ENCODE measurements at regions of chr18 and their contacts with region 1.

Region 1: DNA sequence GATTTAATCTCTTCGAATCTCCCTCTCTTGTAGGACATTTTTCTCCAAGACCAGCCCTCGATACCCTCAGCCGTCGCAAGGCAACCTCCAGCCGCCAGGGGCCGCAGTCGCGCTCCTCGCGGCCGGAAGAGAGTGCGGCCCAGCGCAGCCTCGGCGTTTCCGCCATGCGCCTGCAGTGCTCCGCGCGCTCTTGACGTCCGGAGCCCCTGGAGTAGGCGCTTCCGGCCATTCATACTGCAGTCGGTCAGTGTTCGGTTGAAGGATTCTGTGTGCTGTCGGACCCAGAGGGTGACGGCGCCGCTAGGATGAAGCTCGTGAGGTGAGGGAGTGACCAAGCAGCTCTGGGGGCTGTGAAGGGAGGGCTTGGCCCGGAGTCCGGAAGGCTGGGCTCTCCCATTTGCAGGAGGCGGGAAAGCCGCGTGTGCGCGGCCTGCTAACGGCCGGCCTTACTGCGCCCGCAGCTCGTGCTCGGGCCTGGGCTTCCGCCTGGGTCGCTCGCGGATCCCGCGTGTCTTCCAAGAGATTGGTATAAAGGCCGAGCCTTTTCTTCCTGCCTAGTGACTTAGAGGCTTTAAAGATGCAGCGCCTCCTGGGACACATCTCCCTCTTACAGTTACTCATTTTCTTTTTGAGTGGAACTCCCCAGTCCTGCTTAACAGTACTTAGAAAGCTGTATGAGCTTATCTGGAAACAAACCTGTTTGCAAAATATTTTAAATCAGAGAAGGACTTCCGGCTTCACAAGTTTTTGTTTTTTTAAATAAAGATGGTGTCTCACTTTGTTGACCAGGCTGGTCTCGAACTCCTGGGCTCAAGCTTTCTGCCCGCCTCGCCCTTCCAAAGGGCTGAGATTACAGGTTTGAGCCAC is at the start of gene SNRPD1:
- DNase-seq: peak; percentile 75 to 95 (median 87)
- ATAC-seq: peak; percentile 100
- H3K4me3 ChIP-seq: peak within 1 kb of the TSS; percentile 99
- H3K4me3 Mint-ChIP-seq: peak within 1 kb of the TSS; percentile 90 to 100 (median 96)
- H3K27ac ChIP-seq: peak within 1 kb of the TSS; percentile 95
- H3K27ac Mint-ChIP-seq: peak within 1 kb of the TSS; percentile 91 to 99 (median 98)
- H3K4me1 ChIP-seq: peaks cover 14 to 21% of the 10 kb centered on the region in 2 donors
- H3K4me1 Mint-ChIP-seq: peaks cover 20 to 56% (median 46%) of the 10 kb centered on the region in 7 donors
- H3K27me3 ChIP-seq: no peaks in the 10 kb centered on the region
- H3K27me3 Mint-ChIP-seq: no peaks in the 10 kb centered on the region
- total RNA-seq, gene SNRPD1: 21.9 to 83.4 (median 26.5) TPM

Region 2: DNA sequence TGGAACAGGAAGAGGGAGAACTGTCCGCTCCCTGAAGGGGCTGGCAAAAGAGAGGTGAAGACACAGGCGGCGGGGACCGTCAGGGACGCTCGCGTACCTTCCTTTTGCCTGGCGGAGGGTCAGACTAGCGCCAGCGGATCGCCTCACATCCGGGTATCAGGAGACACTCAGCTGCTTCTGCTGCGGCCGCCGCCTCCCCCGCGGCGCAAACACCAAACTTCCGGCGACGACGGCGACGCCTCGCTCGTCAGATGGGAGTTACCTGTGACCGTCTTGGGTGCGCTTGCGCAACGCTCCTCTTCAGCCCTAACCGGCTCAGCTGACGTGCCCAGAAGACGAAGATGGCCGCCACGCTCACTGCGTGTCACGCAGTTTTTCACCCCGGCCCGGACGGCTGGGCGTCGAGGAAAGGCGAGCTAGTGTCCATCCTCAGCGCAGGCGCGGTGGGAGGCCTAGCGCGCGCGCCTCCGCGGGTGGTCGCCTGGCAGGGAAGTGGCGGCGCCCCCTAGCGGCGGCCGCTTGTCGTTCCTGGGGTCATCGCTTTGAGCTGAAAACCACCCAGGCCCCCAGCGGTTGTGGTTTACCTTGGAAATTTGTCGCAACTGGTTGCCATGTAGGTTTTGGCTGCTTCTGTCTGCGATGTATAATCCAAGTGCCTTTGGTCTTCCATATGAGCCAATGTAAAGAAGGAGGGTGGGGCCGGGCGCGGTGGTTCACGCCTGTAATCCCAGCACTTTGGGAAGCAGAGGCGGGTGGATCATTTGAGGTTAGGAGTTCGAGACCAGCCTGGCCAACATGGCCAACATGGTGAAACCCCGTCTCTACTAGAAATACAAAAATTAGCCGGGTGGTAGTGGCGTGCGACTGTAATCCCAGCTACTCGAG is 11.6 kb before region 1 on chr18 and contains the start of gene ESCO1:
- CTCF ChIA-PET with region 1: interaction called, 38 read pairs
- POLR2A ChIA-PET with region 1: interaction called, 95 read pairs
- intact Hi-C with region 1: loop called (anchors 1 kb)
- DNase-seq: peak; percentile 88 to 97 (median 95)
- ATAC-seq: peak; percentile 90
- H3K4me3 ChIP-seq: peak within 1 kb of the TSS; percentile 99
- H3K4me3 Mint-ChIP-seq: peak within 1 kb of the TSS; percentile 91 to 99 (median 96)
- H3K27ac ChIP-seq: peak within 1 kb of the TSS; percentile 84
- H3K27ac Mint-ChIP-seq: peak within 1 kb of the TSS; percentile 96 to 100 (median 99)
- H3K4me1 ChIP-seq: peaks cover 12 to 24% of the 10 kb centered on the region in 2 donors
- H3K4me1 Mint-ChIP-seq: peaks cover 16 to 57% (median 36%) of the 10 kb centered on the region in 7 donors
- H3K27me3 ChIP-seq: no peaks in the 10 kb centered on the region
- H3K27me3 Mint-ChIP-seq: no peaks in the 10 kb centered on the region
- total RNA-seq, gene ESCO1: 25.9 to 36.4 (median 35.1) TPM

Region 3: DNA sequence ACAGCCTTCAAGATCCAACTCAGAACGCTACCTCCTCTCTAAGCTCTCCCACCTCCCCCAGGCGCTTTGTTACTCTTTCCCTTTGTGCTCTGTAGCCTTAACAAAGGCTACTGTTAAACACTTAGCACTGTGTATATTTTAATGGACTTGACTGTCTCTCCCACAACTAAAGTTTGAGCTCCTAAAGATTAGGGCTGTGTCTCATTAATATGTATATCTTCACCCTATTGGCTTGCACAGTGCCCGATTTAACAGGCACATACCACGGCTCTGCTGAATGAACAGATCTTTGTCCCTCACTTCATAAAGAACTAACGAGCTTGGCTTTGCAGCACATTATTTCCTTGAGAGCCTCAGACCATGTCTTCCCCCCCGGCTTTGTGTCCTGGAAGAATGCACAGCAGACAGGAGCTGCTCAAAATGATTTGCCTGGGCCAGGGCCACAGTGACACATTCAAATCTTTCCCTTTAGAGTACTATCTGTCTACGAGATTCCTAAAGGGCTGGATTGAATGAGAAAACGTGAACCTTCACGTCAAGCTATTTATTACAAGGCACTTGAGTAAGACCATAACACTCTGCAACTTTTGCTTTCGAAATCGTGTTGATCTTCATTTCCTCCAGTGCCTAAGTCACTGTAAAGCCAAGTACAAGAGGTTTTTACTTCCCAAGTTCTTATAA is 70.2 kb after region 1 on chr18:
- CTCF ChIA-PET with region 1: interaction called, 5 read pairs
- POLR2A ChIA-PET with region 1: interaction called, 5 read pairs
- intact Hi-C with region 1: loop called in 1 of 2 experiments (anchors 1 kb)
- DNase-seq: peak in 8 of 9 donors; percentile 24 to 63 (median 47)
- ATAC-seq: peak; percentile 84
- H3K4me3 ChIP-seq: peak overlapping the region; percentile 63
- H3K4me3 Mint-ChIP-seq: no peak overlapping the region
- H3K27ac ChIP-seq: peak overlapping the region; percentile 80
- H3K27ac Mint-ChIP-seq: no peak overlapping the region
- H3K4me1 ChIP-seq: peaks cover 7% of the 10 kb centered on the region in 2 donors
- H3K4me1 Mint-ChIP-seq: peaks cover 0 to 23% (median 10%) of the 10 kb centered on the region in 7 donors
- H3K27me3 ChIP-seq: no peaks in the 10 kb centered on the region
- H3K27me3 Mint-ChIP-seq: no peaks in the 10 kb centered on the region

Region 4: GRCh38 chr18:21740724-21741510 is 128.6 kb after region 1 on chr18 and contains the start of gene MIB1:
- CTCF ChIA-PET with region 1: no interaction called
- POLR2A ChIA-PET with region 1: interaction called, 27 read pairs
- intact Hi-C with region 1: loop called (anchors 1 kb)
- DNase-seq: peak in 8 of 9 donors; percentile 42 to 99 (median 99)
- ATAC-seq: peak; percentile 69
- H3K4me3 ChIP-seq: peak within 1 kb of the TSS; percentile 77
- H3K4me3 Mint-ChIP-seq: peak within 1 kb of the TSS; percentile 83 to 96 (median 94)
- H3K27ac ChIP-seq: peak within 1 kb of the TSS; percentile 83
- H3K27ac Mint-ChIP-seq: peak within 1 kb of the TSS; percentile 78 to 97 (median 94)
- H3K4me1 ChIP-seq: peaks cover 9 to 13% of the 10 kb centered on the region in 2 donors
- H3K4me1 Mint-ChIP-seq: peaks cover 21 to 58% (median 43%) of the 10 kb centered on the region in 7 donors
- H3K27me3 ChIP-seq: no peaks in the 10 kb centered on the region
- H3K27me3 Mint-ChIP-seq: peaks cover 0 to 18% (median 0%) of the 10 kb centered on the region in 5 donors
- total RNA-seq, gene MIB1: 16.0 to 35.2 (median 19.8) TPM

Region 5: GRCh38 chr18:21851327-21851972 is 239.1 kb after region 1 on chr18:
- CTCF ChIA-PET with region 1: no interaction called
- POLR2A ChIA-PET with region 1: no interaction called
- intact Hi-C with region 1: loop called in 1 of 2 experiments (anchors 5 kb)
- DNase-seq: peak in 4 of 9 donors; percentile 1 to 17 (median 4)
- ATAC-seq: no peak
- H3K4me3 ChIP-seq: no peak overlapping the region
- H3K4me3 Mint-ChIP-seq: no peak overlapping the region
- H3K27ac ChIP-seq: no peak overlapping the region
- H3K27ac Mint-ChIP-seq: peak overlapping the region in 1 of 9 donors; percentile 18
- H3K4me1 ChIP-seq: no peaks in the 10 kb centered on the region
- H3K4me1 Mint-ChIP-seq: peaks cover 0 to 11% (median 9%) of the 10 kb centered on the region in 7 donors
- H3K27me3 ChIP-seq: no peaks in the 10 kb centered on the region
- H3K27me3 Mint-ChIP-seq: no peaks in the 10 kb centered on the region

Region 6: DNA sequence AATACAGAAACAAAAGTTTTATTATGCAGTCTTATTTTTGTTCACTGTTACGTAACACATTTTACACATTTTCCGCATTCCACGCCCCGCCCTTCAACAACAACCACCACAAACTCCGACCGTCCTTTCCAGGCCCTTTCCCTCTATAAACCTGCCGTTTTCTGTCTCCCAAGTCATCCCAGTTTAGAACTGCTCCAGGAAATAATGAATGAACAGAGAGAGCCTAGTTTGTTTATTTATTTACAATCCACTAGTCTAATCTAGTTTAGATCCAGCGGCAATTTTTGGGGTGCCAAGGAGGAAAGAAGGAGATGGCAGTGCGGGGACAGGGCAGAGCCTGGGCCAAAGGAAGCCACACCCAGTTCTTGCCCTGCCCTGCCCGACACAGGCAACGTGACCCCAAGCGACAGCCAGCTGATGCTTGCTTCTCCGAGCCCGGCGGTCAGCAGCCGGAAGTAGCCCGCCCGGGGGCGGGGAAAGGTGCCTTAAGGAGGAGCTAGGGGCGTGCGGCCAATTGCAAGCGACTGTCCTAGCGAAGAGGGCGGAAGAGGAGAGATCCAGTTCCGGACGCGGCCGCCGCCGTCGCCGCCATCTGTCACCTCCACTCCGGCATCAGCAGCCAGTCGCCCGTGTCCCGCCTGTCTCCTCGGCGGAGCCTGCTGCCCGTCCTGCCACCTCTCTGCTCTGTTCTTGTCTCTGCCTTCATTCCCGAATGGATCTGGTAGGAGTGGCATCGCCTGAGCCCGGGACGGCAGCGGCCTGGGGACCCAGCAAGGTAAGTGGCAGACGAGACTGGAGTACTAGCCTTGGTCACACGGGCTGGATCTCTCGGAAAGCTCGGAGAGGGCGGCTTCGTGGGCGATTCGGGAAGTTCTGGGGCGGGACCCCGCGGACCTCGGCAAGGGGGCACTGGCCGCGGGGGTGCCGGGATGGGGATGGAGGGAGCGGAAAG is 1840.6 kb after region 1 on chr18 and contains the start of gene RIOK3:
- CTCF ChIA-PET with region 1: no interaction called
- POLR2A ChIA-PET with region 1: no interaction called
- intact Hi-C with region 1: loop called in 1 of 2 experiments (anchors 5 kb)
- DNase-seq: peak; percentile 68 to 96 (median 74)
- ATAC-seq: peak; percentile 97
- H3K4me3 ChIP-seq: peak within 1 kb of the TSS; percentile 82
- H3K4me3 Mint-ChIP-seq: peak within 1 kb of the TSS; percentile 92 to 100 (median 98)
- H3K27ac ChIP-seq: peak within 1 kb of the TSS; percentile 90
- H3K27ac Mint-ChIP-seq: peak within 1 kb of the TSS; percentile 91 to 99 (median 96)
- H3K4me1 ChIP-seq: peaks cover 13 to 25% of the 10 kb centered on the region in 2 donors
- H3K4me1 Mint-ChIP-seq: peaks cover 22 to 55% (median 47%) of the 10 kb centered on the region in 7 donors
- H3K27me3 ChIP-seq: no peaks in the 10 kb centered on the region
- H3K27me3 Mint-ChIP-seq: peaks cover 0 to 7% (median 0%) of the 10 kb centered on the region in 5 donors
- total RNA-seq, gene RIOK3: 74.0 to 153 (median 78.2) TPM

Measured in naive thymus-derived CD4-positive, alpha-beta T cell (primary cell).